ENCODE measurements at regions of chr6 and their contacts with region 1.

Region 1: DNA sequence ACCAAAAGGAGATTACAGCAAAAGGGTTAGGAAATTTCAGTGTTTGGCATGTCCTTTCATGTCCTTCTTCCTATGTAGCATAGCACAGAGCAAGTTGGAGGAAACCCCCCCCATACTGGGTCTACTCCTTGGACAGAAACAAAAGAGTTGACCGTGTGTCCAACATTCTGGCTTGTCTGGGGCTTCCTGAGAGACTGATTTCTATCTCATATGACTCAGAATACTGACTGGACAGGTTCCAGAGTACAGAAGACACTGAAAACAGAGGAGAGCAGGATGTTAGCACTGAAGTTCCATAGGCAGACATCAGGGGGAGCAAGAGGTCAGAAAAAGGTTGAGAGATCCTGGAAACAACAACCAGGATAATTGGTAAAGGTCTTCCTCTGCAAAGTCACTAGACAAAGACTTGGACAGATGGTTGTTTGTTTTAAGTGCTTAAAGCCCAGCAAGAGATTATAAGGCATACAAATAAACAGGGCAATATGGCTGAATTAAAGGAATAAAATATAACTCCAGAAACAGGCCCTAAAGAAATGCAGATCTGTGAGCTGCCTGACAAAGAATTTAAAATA is 48.4 kb downstream of the USP49 start:
- DNase-seq: peak; percentile 99
- H3K4me3 ChIP-seq: peak overlapping the region in 1 of 3 experiments; percentile 16
- H3K27ac ChIP-seq: peak overlapping the region; percentile 96
- H3K4me1 ChIP-seq: peaks cover 17% of the 10 kb centered on the region
- H3K27me3 ChIP-seq: no peaks in the 10 kb centered on the region
- CTCF ChIP-seq: peak; percentile 79 to 85
- POLR2A ChIP-seq: peak; percentile 46

Region 2: DNA sequence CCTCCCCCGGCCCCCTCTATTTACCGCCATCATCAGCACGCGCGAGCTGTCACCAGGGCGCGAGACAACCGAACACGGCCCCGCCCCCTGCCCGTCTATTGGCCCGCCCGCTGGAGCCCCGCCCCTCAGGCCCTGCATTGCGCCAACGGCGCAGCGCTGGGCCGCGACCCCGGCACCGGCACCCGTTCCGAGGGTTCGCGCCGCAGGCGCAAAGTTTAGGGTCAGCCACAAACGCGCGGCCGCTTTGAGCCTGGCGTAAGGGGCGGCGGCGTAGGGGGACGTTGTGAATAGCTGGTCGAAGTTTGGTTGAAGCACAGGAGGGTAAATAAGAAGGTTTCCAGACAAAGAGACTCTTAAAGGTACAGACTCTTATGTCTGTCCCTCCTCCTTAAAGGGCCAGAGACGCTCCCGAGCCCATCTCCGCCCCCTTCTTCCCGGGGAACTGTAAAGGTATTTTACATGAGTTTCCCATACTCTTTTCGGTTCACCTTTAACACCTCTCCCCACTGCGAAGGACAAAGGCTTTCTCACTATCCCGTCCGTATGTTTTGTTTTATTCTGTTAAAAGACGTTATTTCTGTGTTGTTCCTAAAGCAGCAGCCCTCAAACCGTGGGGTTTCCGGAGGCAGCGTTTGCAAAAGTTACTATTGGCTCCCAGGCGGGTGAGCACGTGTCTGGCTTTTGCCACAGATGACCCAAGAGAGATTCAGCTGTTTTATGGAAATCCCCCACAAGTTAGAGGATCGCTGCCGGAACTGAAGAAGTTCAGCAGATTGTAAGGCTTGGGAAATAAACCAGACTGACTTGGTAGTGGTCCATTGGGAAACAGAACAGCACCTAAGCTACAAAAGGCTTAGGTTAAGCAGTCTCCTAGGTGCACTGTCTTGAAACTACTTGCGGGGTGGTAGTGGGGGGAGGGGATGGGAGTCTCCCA is 48.8 kb after region 1 on chr6 and contains the start of gene USP49:
- CTCF ChIA-PET with region 1: interaction called, 9 read pairs
- POLR2A ChIA-PET with region 1: no interaction called
- dilution Hi-C with region 1: no loop called
- intact Hi-C with region 1: loop called (anchors 1 kb)
- DNase-seq: peak; percentile 89
- H3K4me3 ChIP-seq: peak within 1 kb of the TSS; percentile 70 to 78 (median 72)
- H3K27ac ChIP-seq: peak within 1 kb of the TSS; percentile 84
- H3K4me1 ChIP-seq: peaks cover 12% of the 10 kb centered on the region
- H3K27me3 ChIP-seq: peaks cover 0 to 2% of the 10 kb centered on the region in 2 experiments
- CTCF ChIP-seq: no peak
- POLR2A ChIP-seq: peak; percentile 70
- total RNA-seq, gene USP49: 4.1 and 4.5 TPM in 2 replicates

Region 3: DNA sequence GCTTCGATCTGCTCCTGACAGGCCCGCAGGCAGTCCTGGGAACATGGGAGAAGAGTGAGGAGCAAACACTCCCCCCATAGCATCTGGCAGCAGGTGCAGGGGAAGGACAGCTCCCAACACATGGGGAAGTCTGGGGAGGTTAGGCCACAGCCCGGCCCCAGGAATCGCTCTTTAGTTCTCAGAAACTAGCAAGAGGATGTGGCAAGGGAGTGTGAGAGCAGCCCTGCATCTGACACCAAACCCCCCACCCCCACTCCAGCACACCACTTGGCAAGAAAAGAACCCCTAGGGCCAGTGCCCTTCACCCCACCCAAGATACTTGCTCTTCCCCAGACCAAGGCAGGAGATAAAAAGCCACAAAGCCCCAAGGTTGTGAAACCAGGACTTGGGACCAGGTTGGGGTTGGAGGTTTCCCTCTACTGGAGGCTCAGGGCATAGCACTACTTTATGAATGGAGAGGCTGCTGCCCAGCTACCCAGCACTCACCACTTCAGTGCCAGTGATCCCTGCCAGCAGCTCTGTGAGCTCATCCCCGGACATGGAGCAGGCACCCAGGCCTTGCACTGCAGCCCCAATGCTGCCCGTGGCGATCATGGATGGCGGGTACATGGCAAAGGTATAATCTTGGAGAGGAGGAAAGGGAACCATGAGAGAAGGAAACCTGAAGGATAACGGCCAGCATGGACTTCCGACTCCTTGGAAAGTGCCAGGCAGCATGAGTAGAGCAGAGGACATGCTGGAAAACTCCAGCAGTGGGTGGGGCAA is 89.5 kb after region 1 on chr6:
- CTCF ChIA-PET with region 1: interaction called, 10 read pairs
- POLR2A ChIA-PET with region 1: no interaction called
- dilution Hi-C with region 1: no loop called
- intact Hi-C with region 1: loop called (anchors 1 kb)
- DNase-seq: peak; percentile 82
- H3K4me3 ChIP-seq: no peak overlapping the region
- H3K27ac ChIP-seq: no peak overlapping the region
- H3K4me1 ChIP-seq: peaks cover 27% of the 10 kb centered on the region
- H3K27me3 ChIP-seq: no peaks in the 10 kb centered on the region
- CTCF ChIP-seq: peak; percentile 84 to 86
- POLR2A ChIP-seq: no peak

Region 4: GRCh38 chr6:42118162-42119001 is 271.6 kb after region 1 on chr6:
- CTCF ChIA-PET with region 1: no interaction called
- POLR2A ChIA-PET with region 1: no interaction called
- dilution Hi-C with region 1: no loop called
- intact Hi-C with region 1: no loop called
- DNase-seq: no peak
- H3K4me3 ChIP-seq: no peak overlapping the region
- H3K27ac ChIP-seq: no peak overlapping the region
- H3K4me1 ChIP-seq: no peaks in the 10 kb centered on the region
- H3K27me3 ChIP-seq: peaks cover 0 to 2% of the 10 kb centered on the region in 2 experiments
- CTCF ChIP-seq: no peak
- POLR2A ChIP-seq: no peak